ENCODE measurements at regions of chr2 and their contacts with region 1.

Region 1: GRCh38 chr2:176096986-176097819 is 2.4 kb upstream of the HOXD12 start:
- DNase-seq: peak; percentile 10
- H3K4me3 ChIP-seq: peak overlapping the region; percentile 49
- H3K27ac ChIP-seq: no peak overlapping the region
- H3K27me3 ChIP-seq: peaks cover 93% of the 10 kb centered on the region
- CTCF ChIP-seq: peak; percentile 85

Region 2: GRCh38 chr2:175366815-175367214 is 730.4 kb before region 1 on chr2:
- CTCF ChIA-PET with region 1: interaction called, 28 read pairs
- POLR2A ChIA-PET with region 1: no interaction called
- DNase-seq: no peak
- H3K4me3 ChIP-seq: no peak overlapping the region
- H3K27ac ChIP-seq: no peak overlapping the region
- H3K27me3 ChIP-seq: peaks cover 3% of the 10 kb centered on the region
- CTCF ChIP-seq: peak; percentile 78

Region 3: GRCh38 chr2:175414882-175415487 is 682.2 kb before region 1 on chr2:
- CTCF ChIA-PET with region 1: interaction called, 11 read pairs
- POLR2A ChIA-PET with region 1: no interaction called
- DNase-seq: peak; percentile 6
- H3K4me3 ChIP-seq: no peak overlapping the region
- H3K27ac ChIP-seq: no peak overlapping the region
- H3K27me3 ChIP-seq: peaks cover 2% of the 10 kb centered on the region
- CTCF ChIP-seq: peak; percentile 75

Region 4: GRCh38 chr2:175690113-175690837 is 406.9 kb before region 1 on chr2:
- CTCF ChIA-PET with region 1: interaction called, 135 read pairs
- POLR2A ChIA-PET with region 1: no interaction called
- DNase-seq: peak; percentile 49
- H3K4me3 ChIP-seq: no peak overlapping the region
- H3K27ac ChIP-seq: no peak overlapping the region
- H3K27me3 ChIP-seq: peaks cover 3% of the 10 kb centered on the region
- CTCF ChIP-seq: peak; percentile 77

Region 5: DNA sequence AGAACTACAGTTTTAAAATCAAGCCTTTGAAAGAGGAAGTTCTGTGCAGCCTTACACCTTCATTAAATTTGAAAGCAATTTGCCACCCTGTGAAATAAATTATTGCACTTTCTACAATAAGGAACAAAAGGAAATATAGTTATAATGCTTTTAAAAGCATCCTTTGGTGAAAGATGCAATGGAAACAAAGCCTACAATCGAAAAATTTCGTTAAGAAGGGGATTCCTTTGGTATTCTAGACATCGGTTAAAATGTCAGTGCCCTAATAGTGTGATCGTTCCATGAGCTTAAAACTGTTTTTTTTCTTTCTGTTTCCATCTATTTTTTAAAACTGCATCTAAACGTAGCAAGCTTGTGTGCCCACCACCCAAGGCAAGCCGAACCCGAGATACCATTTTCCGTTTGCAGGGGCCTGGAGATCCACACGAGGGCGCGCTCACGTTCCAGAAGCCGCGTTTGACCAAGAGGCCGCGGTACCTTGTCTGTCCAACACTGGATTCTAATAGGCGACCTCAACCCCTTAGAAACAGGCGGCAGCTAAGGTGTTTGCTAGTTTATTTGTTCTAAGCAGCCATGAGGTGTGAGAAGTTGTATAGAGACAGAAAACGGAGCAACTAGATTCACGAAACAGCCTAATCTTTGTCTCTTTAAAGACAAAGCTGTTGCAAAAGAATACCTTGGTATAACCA is 13.9 kb after region 1 on chr2:
- CTCF ChIA-PET with region 1: interaction called, 10 read pairs
- POLR2A ChIA-PET with region 1: no interaction called
- DNase-seq: no peak
- H3K4me3 ChIP-seq: no peak overlapping the region
- H3K27ac ChIP-seq: no peak overlapping the region
- H3K27me3 ChIP-seq: peaks cover 89% of the 10 kb centered on the region
- CTCF ChIP-seq: peak; percentile 67

Measured in AG04450 (cell line).